Ovary (tissue), 10 donors: ENCODE measurements at regions of chr15 and their contacts with region 1.

Region 1: GRCh38 chr15:89206908-89207331 is 14.5 kb downstream of the RLBP1 start:
- DNase-seq: peak; percentile 42 to 79 (median 70)
- H3K4me3 ChIP-seq: no peak overlapping the region
- H3K27ac ChIP-seq: no peak overlapping the region
- H3K4me1 ChIP-seq: no peaks in the 10 kb centered on the region
- H3K27me3 ChIP-seq: no peaks in the 10 kb centered on the region
- CTCF ChIP-seq: peak; percentile 78 to 89 (median 83)
- EP300 ChIP-seq: no peak
- POLR2A ChIP-seq: no peak

Region 2: DNA sequence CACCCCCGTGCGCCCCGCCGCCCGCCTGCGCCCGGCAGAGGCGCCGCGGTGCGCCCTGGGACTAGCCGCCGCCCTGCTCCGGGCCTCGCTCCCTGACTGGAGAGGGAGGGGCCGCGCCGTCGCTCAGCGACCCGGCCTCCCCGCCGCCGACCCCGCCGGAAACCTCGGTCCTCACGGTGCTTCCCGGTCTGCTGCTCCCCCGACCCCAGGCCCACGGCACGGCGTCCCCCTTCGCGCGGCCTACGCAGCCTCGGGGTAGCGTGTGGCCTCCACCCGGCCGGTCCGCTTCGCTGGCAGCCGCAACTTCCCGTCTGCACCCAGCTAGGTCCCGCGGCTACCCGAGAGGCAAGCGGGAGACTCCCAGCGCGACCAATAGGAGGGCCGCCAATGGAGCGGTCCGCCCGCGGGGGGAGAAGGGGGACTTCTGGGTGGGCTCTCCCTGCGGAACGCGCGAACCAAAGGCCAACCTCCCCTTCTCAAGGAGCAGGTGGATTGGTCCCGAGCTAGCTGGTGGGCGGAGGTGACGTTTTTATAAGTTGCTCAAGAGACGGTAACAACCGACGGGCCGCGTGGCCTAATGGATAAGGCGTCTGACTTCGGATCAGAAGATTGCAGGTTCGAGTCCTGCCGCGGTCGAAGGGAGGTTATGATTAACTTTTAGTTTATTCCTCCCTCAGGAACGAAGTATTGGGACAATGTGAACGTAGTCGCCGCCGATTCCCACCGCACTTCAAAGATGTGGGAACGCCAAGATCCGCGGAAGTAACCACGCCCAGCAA is 127.8 kb after region 1 on chr15 and contains the start of gene POLG:
- intact Hi-C with region 1: loop called in 1 of 4 experiments (anchors 10 kb)
- DNase-seq: peak; percentile 98 to 99 (median 99)
- H3K4me3 ChIP-seq: peak within 1 kb of the TSS; percentile 66
- H3K27ac ChIP-seq: peak within 1 kb of the TSS; percentile 77 to 86
- H3K4me1 ChIP-seq: peaks cover 5% of the 10 kb centered on the region
- H3K27me3 ChIP-seq: no peaks in the 10 kb centered on the region
- CTCF ChIP-seq: peak in 1 of 3 donors; percentile 13
- EP300 ChIP-seq: no peak
- POLR2A ChIP-seq: peak; percentile 92
- total RNA-seq, gene POLG: 33.0 to 52.0 (median 43.0) TPM